Caco-2 (cell line): ENCODE measurements at regions of chr1 and their contacts with region 1.

Region 1: GRCh38 chr1:111934050-111934852 is 55.2 kb downstream of the KCND3 start:
- DNase-seq: no peak
- H3K4me3 ChIP-seq: no peak overlapping the region
- H3K4me3 Mint-ChIP-seq: no peak overlapping the region
- H3K27ac Mint-ChIP-seq: no peak overlapping the region
- H3K4me1 ChIP-seq: no peaks in the 10 kb centered on the region
- H3K4me1 Mint-ChIP-seq: no peaks in the 10 kb centered on the region
- H3K27me3 ChIP-seq: no peaks in the 10 kb centered on the region
- H3K27me3 Mint-ChIP-seq: no peaks in the 10 kb centered on the region
- CTCF ChIP-seq: no peak

Region 2: GRCh38 chr1:111955755-111956154 is 21.5 kb after region 1 on chr1:
- CTCF ChIA-PET with region 1: no interaction called
- POLR2A ChIA-PET with region 1: no interaction called
- intact Hi-C with region 1: no loop called
- DNase-seq: no peak
- H3K4me3 ChIP-seq: no peak overlapping the region
- H3K4me3 Mint-ChIP-seq: no peak overlapping the region
- H3K27ac Mint-ChIP-seq: no peak overlapping the region
- H3K4me1 ChIP-seq: no peaks in the 10 kb centered on the region
- H3K4me1 Mint-ChIP-seq: no peaks in the 10 kb centered on the region
- H3K27me3 ChIP-seq: no peaks in the 10 kb centered on the region
- H3K27me3 Mint-ChIP-seq: no peaks in the 10 kb centered on the region
- CTCF ChIP-seq: no peak

Region 3: DNA sequence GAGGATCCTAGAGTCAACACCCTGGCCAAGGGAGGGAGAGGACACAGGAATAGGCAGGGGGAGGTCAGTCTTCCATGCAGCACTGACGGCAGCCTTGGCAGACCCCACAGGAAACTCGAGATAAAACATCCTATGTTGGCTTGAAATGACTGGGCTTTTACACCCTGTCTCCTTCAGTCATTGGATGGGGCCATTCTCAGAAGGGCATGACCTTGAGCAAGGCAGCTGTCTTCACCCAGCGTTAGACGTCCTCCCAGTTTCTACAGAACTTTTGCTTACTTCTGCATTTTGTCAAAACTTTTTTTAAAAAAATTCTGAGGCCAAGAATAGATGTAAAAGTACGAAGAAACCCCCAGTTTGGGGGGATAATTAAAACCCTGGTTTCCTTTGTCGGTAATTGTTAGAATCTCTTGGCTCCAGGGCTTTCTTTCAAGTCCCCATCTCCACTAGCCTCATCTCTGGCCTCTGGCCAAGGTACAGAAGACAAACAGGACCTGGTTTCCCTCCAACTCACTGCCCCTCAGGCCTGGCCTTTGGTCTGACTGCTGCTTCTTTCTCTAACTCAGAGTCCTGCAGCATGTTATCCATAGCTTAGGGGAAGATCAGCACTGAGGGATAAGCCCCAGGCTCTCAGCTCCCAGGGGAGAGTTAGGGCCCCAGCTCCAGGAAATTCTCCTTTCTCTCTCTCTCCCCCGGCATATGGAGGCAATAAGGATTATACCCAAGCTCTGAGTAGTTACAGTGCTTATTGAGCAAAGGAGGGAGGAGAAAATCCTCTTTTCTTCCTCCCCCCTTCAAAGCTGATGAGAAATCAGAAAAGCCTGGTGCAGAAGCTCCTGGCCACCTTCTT is 106.9 kb after region 1 on chr1:
- CTCF ChIA-PET with region 1: no interaction called
- POLR2A ChIA-PET with region 1: no interaction called
- intact Hi-C with region 1: no loop called
- DNase-seq: no peak
- H3K4me3 ChIP-seq: no peak overlapping the region
- H3K4me3 Mint-ChIP-seq: no peak overlapping the region
- H3K27ac Mint-ChIP-seq: no peak overlapping the region
- H3K4me1 ChIP-seq: no peaks in the 10 kb centered on the region
- H3K4me1 Mint-ChIP-seq: no peaks in the 10 kb centered on the region
- H3K27me3 ChIP-seq: peaks cover 1% of the 10 kb centered on the region; the same call in 1 of the 2 replicates
- H3K27me3 Mint-ChIP-seq: peaks cover 20% of the 10 kb centered on the region
- CTCF ChIP-seq: no peak

Region 4: GRCh38 chr1:112614460-112615065 is 680.3 kb after region 1 on chr1:
- CTCF ChIA-PET with region 1: no interaction called
- POLR2A ChIA-PET with region 1: interaction called, 14 read pairs
- intact Hi-C with region 1: no loop called
- DNase-seq: peak in 1 of 2 experiments; percentile 27
- H3K4me3 ChIP-seq: no peak overlapping the region
- H3K4me3 Mint-ChIP-seq: no peak overlapping the region
- H3K27ac Mint-ChIP-seq: no peak overlapping the region
- H3K4me1 ChIP-seq: no peaks in the 10 kb centered on the region
- H3K4me1 Mint-ChIP-seq: no peaks in the 10 kb centered on the region
- H3K27me3 ChIP-seq: no peaks in the 10 kb centered on the region
- H3K27me3 Mint-ChIP-seq: no peaks in the 10 kb centered on the region
- CTCF ChIP-seq: peak; percentile 34 to 47